ENCODE measurements at regions of chr5 and their contacts with region 1.

Region 1: GRCh38 chr5:151771259-151772028 is at the start of gene G3BP1:
- DNase-seq: peak; percentile 90 to 100 (median 95)
- ATAC-seq: peak; percentile 87
- H3K4me3 ChIP-seq: peak within 1 kb of the TSS; percentile 90
- H3K27ac ChIP-seq: peak within 1 kb of the TSS; percentile 91
- H3K4me1 ChIP-seq: peaks cover 12 to 19% of the 10 kb centered on the region in 2 experiments; a peak in 4 of 5 replicates
- H3K27me3 ChIP-seq: no peaks in the 10 kb centered on the region
- CTCF ChIP-seq: peak; percentile 78 to 91 (median 82)
- EP300 ChIP-seq: peak; percentile 58
- POLR2A ChIP-seq: peak; percentile 95
- RAD21 ChIP-seq: peak; percentile 64 to 78
- polyA plus RNA-seq, gene G3BP1: 54.7 to 55.5 TPM

Region 2: DNA sequence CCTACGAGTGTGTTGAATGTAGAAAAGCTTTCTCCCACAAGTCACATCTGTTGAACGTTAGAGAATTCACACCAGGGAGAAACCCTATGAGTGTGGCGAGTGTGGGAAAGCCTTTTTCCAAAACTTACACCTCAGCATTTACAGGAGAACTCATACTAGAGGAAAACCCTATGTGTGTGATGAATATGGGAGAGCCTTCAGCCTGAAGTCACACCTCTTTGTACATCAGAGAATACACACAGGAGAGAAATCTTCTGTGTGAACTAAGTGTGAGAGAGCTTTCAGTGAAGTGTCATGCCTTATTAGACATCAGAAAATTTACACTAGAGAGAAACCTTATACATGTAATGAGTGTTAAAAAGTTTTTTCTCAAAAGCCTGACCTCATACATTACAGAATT is 792.9 kb before region 1 on chr5:
- CTCF ChIA-PET with region 1: no interaction called
- POLR2A ChIA-PET with region 1: no interaction called
- in situ Hi-C with region 1: no loop called
- intact Hi-C with region 1: no loop called
- DNase-seq: no peak
- ATAC-seq: no peak
- H3K4me3 ChIP-seq: no peak overlapping the region
- H3K27ac ChIP-seq: no peak overlapping the region
- H3K4me1 ChIP-seq: no peaks in the 10 kb centered on the region
- H3K27me3 ChIP-seq: no peaks in the 10 kb centered on the region
- CTCF ChIP-seq: no peak
- EP300 ChIP-seq: no peak
- POLR2A ChIP-seq: no peak
- RAD21 ChIP-seq: no peak

Region 3: DNA sequence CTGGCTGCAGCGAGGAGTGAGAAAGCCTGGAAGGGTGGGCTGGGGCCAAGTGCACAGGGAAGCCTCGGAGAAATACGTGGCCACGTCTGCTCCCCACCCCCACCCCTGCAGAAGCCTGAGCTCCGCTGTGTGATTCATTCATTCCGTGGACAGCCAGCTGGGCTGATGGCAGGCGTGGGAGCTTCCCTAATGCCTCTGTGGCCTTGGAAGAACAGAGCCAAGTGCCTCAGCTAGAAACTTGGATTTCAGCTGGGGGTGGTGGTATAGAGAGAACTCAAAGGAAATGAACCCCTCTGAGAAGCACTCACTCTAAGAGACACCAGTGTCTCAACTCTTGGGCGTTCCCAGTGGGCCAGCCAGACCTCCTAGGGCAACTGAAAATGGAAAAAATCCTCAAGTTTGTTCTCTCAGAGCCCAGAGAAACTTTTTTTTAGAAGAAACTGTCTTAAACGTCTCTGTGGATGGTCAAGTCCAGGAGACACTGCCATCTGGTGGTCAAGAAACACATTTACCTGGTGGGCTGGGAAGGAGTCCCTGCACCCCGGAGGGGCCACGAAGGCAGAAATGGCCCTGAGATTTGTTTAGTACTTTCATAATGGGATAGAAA is 31.0 kb before region 1 on chr5:
- CTCF ChIA-PET with region 1: interaction called, 4 read pairs
- POLR2A ChIA-PET with region 1: interaction called, 4 read pairs
- in situ Hi-C with region 1: no loop called
- intact Hi-C with region 1: loop called (anchors 1 kb)
- DNase-seq: peak; percentile 77 to 79 (median 78)
- ATAC-seq: peak; percentile 92
- H3K4me3 ChIP-seq: no peak overlapping the region
- H3K27ac ChIP-seq: no peak overlapping the region
- H3K4me1 ChIP-seq: peaks cover 0 to 6% of the 10 kb centered on the region in 2 experiments; a peak in 3 of 5 replicates
- H3K27me3 ChIP-seq: no peaks in the 10 kb centered on the region
- CTCF ChIP-seq: peak; percentile 73 to 90 (median 81)
- EP300 ChIP-seq: no peak
- POLR2A ChIP-seq: no peak
- RAD21 ChIP-seq: peak; percentile 55 to 76

Region 4: GRCh38 chr5:151758430-151759241 is 12.8 kb before region 1 on chr5 and contains the start of gene ATOX1:
- CTCF ChIA-PET with region 1: no interaction called
- POLR2A ChIA-PET with region 1: interaction called, 56 read pairs
- in situ Hi-C with region 1: no loop called
- intact Hi-C with region 1: no loop called
- DNase-seq: peak; percentile 95 to 100 (median 99)
- ATAC-seq: peak; percentile 97
- H3K4me3 ChIP-seq: peak within 1 kb of the TSS; percentile 97
- H3K27ac ChIP-seq: peak within 1 kb of the TSS; percentile 84
- H3K4me1 ChIP-seq: peaks cover 10 to 30% of the 10 kb centered on the region in 2 experiments
- H3K27me3 ChIP-seq: no peaks in the 10 kb centered on the region
- CTCF ChIP-seq: peak in 1 of 3 experiments; percentile 33; a peak in 1 of 6 replicates
- EP300 ChIP-seq: no peak; the same call in 1 of the 2 replicates
- POLR2A ChIP-seq: peak; percentile 94
- RAD21 ChIP-seq: no peak
- polyA plus RNA-seq, gene ATOX1: 303 to 318 TPM